Calu3 (cell line): ENCODE measurements at regions of chr2 and their contacts with region 1.

Region 1: GRCh38 chr2:155235710-155236109 is 537.2 kb downstream of the KCNJ3 start:
- DNase-seq: no peak
- H3K4me3 Mint-ChIP-seq: no peak overlapping the region
- H3K27ac Mint-ChIP-seq: no peak overlapping the region
- H3K4me1 Mint-ChIP-seq: no peaks in the 10 kb centered on the region
- H3K27me3 Mint-ChIP-seq: no peaks in the 10 kb centered on the region
- CTCF ChIP-seq: no peak

Region 2: GRCh38 chr2:155203207-155203606 is 32.5 kb before region 1 on chr2:
- CTCF ChIA-PET with region 1: no interaction called
- intact Hi-C with region 1: loop called (anchors 1 kb)
- DNase-seq: no peak
- H3K4me3 Mint-ChIP-seq: no peak overlapping the region
- H3K27ac Mint-ChIP-seq: no peak overlapping the region
- H3K4me1 Mint-ChIP-seq: no peaks in the 10 kb centered on the region
- H3K27me3 Mint-ChIP-seq: no peaks in the 10 kb centered on the region
- CTCF ChIP-seq: no peak